Activated CD8-positive, alpha-beta T cell treated with anti-CD3 and anti-CD28 coated beads for 36 hours (primary cell): ENCODE measurements at regions of chrX and their contacts with region 1.

Region 1: DNA sequence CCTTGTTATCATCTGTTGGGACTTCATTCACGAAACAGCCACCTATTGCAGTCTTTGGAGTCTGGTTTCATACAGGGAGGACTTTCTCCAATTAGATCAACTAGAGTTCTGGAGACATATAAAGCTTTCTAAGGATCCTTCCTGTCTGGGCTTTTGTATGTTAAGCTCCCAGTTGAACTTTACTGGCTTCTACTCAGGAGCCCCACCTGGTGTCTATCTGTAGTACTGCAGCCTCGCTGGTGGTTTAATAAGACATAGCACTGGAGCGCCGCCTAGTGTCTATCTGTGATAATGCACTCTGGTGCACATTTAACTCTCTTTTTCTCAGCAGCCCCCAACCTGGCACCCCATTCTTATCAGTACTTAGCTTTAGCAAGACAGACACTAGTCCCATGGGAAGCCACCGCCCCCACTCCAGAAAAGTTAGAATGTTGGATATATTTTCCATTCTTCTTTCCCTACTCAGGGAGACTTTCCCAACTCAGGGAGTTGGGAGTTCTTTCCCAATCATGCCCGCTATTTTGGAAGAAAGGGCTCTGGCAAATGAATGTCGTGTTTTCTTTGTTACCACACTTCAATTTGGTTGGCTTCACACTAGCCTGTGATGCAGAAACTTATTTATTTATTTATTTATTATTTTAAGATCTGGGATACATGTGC is 36.9 kb upstream of the SYTL4 start:
- DNase-seq: peak; percentile 92
- ATAC-seq: peak; percentile 94
- H3K4me3 Mint-ChIP-seq: no peak overlapping the region
- H3K27ac Mint-ChIP-seq: no peak overlapping the region
- H3K4me1 Mint-ChIP-seq: no peaks in the 10 kb centered on the region
- H3K27me3 Mint-ChIP-seq: peaks cover 4% of the 10 kb centered on the region
- CTCF ChIP-seq: peak; percentile 93

Region 2: DNA sequence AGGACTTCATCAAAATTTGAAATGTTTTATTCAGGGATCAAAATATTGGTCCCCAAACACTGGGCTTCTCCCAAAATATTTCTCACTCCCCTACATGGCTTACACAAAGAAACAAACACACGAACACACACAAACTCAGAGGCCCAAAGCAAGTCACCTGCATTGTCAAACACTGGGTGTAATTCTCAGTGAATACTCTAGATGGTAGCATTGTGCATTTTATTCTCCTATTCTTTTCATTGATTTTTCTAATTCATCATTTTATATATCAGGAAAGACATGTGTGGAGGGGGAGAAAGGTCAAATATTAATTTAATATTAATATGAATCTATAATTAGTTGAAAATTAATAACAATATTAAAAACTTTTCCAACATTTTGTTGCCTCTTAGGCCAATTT is 256.3 kb before region 1 on chrX:
- CTCF ChIA-PET with region 1: interaction called, 8 read pairs
- POLR2A ChIA-PET with region 1: no interaction called
- intact Hi-C with region 1: loop called (anchors 10 kb)
- DNase-seq: no peak
- ATAC-seq: no peak
- H3K4me3 Mint-ChIP-seq: no peak overlapping the region
- H3K27ac Mint-ChIP-seq: no peak overlapping the region
- H3K4me1 Mint-ChIP-seq: no peaks in the 10 kb centered on the region
- H3K27me3 Mint-ChIP-seq: peaks cover 3% of the 10 kb centered on the region
- CTCF ChIP-seq: peak; percentile 67

Region 3: GRCh38 chrX:100674705-100675104 is 94.1 kb before region 1 on chrX:
- CTCF ChIA-PET with region 1: interaction called, 21 read pairs
- POLR2A ChIA-PET with region 1: no interaction called
- intact Hi-C with region 1: no loop called
- DNase-seq: no peak
- ATAC-seq: no peak
- H3K4me3 Mint-ChIP-seq: no peak overlapping the region
- H3K27ac Mint-ChIP-seq: no peak overlapping the region
- H3K4me1 Mint-ChIP-seq: peaks cover 4% of the 10 kb centered on the region
- H3K27me3 Mint-ChIP-seq: no peaks in the 10 kb centered on the region
- CTCF ChIP-seq: no peak

Region 4: DNA sequence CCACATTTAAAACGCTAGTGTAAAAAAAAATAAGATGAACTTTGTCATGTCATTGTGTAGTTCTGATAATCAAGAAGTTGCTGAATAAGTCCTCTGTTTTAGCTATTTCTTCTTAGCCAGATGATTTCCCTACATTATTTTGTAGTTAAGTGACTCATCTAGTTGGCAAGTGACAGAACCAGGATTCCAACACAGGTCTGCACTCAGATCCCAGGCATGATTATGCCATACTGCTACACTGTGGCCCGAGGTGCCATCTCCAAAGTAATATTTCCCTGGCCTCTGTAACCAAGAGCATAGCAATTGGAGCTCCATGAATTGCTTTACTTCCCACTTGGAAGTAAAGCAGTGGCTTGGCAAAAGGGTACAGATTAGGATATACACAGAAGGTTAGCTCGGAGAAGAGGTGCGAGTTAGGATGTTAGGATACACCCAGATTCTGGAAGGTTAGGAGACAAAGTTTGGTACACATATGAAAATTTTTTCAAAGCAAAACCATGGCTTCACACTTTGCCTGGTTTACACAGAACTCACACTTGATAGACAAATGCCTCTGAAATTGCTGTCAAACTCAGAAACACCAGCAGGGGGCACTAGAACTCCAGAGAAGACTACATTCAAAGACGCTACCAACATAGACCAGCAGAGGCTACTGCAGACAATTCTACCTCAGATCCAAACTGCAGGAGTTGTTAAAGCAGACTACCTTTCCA is 83.4 kb before region 1 on chrX:
- CTCF ChIA-PET with region 1: interaction called, 172 read pairs
- POLR2A ChIA-PET with region 1: interaction called, 5 read pairs
- intact Hi-C with region 1: loop called (anchors 1 kb)
- DNase-seq: peak; percentile 78
- ATAC-seq: peak; percentile 75
- H3K4me3 Mint-ChIP-seq: no peak overlapping the region
- H3K27ac Mint-ChIP-seq: no peak overlapping the region
- H3K4me1 Mint-ChIP-seq: peaks cover 17% of the 10 kb centered on the region
- H3K27me3 Mint-ChIP-seq: peaks cover 2% of the 10 kb centered on the region
- CTCF ChIP-seq: peak; percentile 70

Region 5: GRCh38 chrX:100690617-100691016 is 78.2 kb before region 1 on chrX:
- CTCF ChIA-PET with region 1: interaction called, 172 read pairs
- POLR2A ChIA-PET with region 1: interaction called, 5 read pairs
- intact Hi-C with region 1: loop called (anchors 1 kb)
- DNase-seq: no peak
- ATAC-seq: no peak
- H3K4me3 Mint-ChIP-seq: no peak overlapping the region
- H3K27ac Mint-ChIP-seq: no peak overlapping the region
- H3K4me1 Mint-ChIP-seq: peaks cover 21% of the 10 kb centered on the region
- H3K27me3 Mint-ChIP-seq: peaks cover 15% of the 10 kb centered on the region
- CTCF ChIP-seq: no peak

Region 6: DNA sequence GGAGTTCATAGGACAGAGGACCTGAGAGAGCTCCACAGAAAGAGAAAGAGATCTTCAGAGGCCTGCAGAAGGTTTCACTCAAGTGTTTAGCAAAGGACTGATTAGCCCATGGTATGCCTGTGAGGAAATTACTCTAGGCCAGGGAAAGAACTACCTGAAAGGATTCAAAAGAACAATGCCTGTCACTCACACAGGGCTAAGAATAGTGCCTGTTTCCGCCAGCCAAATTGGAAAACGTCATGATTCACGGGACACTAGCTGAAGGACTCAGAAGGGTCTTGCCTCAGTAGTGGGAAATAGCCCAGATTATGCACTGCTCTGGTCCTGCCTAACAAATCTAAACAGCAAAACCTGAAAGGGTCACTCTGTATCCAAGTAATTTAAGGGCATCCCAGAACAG is 58.0 kb before region 1 on chrX:
- CTCF ChIA-PET with region 1: interaction called, 10 read pairs
- POLR2A ChIA-PET with region 1: no interaction called
- intact Hi-C with region 1: no loop called
- DNase-seq: no peak
- ATAC-seq: no peak
- H3K4me3 Mint-ChIP-seq: no peak overlapping the region
- H3K27ac Mint-ChIP-seq: no peak overlapping the region
- H3K4me1 Mint-ChIP-seq: no peaks in the 10 kb centered on the region
- H3K27me3 Mint-ChIP-seq: peaks cover 14% of the 10 kb centered on the region
- CTCF ChIP-seq: no peak